MCF 10A (cell line): ENCODE measurements at regions of chr2 and their contacts with region 1.

Region 1: GRCh38 chr2:225002039-225002655 is 40.1 kb downstream of the DOCK10 start:
- DNase-seq: peak; percentile 88
- H3K4me3 Mint-ChIP-seq: no peak overlapping the region
- H3K27ac Mint-ChIP-seq: no peak overlapping the region
- H3K4me1 Mint-ChIP-seq: peaks cover 11% of the 10 kb centered on the region
- H3K27me3 Mint-ChIP-seq: no peaks in the 10 kb centered on the region
- CTCF ChIP-seq: peak; percentile 87

Region 2: GRCh38 chr2:224357098-224357901 is 644.8 kb before region 1 on chr2:
- CTCF ChIA-PET with region 1: interaction called, 7 read pairs
- POLR2A ChIA-PET with region 1: no interaction called
- intact Hi-C with region 1: loop called (anchors 1 kb)
- DNase-seq: peak; percentile 72
- H3K4me3 Mint-ChIP-seq: no peak overlapping the region
- H3K27ac Mint-ChIP-seq: no peak overlapping the region
- H3K4me1 Mint-ChIP-seq: peaks cover 7% of the 10 kb centered on the region
- H3K27me3 Mint-ChIP-seq: peaks cover 26% of the 10 kb centered on the region
- CTCF ChIP-seq: peak; percentile 80

Region 3: GRCh38 chr2:224749136-224749535 is 253.0 kb before region 1 on chr2:
- CTCF ChIA-PET with region 1: interaction called, 5 read pairs
- POLR2A ChIA-PET with region 1: no interaction called
- intact Hi-C with region 1: loop called (anchors 1 kb)
- DNase-seq: peak; percentile 17
- H3K4me3 Mint-ChIP-seq: no peak overlapping the region
- H3K27ac Mint-ChIP-seq: no peak overlapping the region
- H3K4me1 Mint-ChIP-seq: peaks cover 2% of the 10 kb centered on the region
- H3K27me3 Mint-ChIP-seq: no peaks in the 10 kb centered on the region
- CTCF ChIP-seq: no peak

Region 4: DNA sequence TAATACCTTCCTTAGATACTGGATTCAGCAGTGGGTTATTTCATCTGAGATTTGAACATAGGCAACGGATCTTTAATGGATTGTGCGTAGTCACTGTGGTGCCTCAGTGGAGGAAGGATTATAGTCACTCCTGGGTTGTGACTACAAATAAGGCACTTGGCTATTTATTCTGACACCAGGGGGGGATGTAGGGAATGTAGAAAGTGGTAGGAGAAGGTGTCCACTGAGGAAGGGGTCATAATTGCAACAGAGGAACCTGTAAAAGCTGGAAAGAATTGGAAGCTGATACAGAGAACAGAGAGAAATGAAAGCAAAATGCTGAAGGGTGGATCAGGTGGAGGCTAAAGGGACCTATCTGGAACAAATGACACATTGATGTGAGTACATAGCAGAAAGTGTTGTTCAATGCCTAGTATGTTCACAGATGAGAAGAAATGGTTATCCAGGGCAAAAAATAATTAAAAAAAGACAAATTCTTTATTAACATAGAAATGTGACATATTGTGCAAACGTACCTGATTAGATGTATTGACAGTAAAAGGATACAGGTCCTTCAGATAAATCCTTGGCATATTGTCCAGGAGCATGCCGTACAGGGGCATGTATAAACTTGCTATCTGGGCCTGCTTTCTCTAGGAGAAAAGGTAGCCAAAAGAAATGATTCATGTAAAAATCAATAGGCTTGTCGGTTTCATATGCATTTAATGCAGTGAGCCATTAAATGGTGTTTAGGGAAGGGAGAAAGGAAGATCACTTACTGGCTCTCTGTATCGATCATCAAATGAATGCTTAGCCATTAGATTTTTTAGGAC is 194.8 kb before region 1 on chr2:
- CTCF ChIA-PET with region 1: interaction called, 19 read pairs
- POLR2A ChIA-PET with region 1: interaction called, 3 read pairs
- intact Hi-C with region 1: loop called (anchors 1 kb)
- DNase-seq: peak; percentile 70
- H3K4me3 Mint-ChIP-seq: no peak overlapping the region
- H3K27ac Mint-ChIP-seq: no peak overlapping the region
- H3K4me1 Mint-ChIP-seq: peaks cover 12% of the 10 kb centered on the region
- H3K27me3 Mint-ChIP-seq: no peaks in the 10 kb centered on the region
- CTCF ChIP-seq: peak; percentile 1

Region 5: DNA sequence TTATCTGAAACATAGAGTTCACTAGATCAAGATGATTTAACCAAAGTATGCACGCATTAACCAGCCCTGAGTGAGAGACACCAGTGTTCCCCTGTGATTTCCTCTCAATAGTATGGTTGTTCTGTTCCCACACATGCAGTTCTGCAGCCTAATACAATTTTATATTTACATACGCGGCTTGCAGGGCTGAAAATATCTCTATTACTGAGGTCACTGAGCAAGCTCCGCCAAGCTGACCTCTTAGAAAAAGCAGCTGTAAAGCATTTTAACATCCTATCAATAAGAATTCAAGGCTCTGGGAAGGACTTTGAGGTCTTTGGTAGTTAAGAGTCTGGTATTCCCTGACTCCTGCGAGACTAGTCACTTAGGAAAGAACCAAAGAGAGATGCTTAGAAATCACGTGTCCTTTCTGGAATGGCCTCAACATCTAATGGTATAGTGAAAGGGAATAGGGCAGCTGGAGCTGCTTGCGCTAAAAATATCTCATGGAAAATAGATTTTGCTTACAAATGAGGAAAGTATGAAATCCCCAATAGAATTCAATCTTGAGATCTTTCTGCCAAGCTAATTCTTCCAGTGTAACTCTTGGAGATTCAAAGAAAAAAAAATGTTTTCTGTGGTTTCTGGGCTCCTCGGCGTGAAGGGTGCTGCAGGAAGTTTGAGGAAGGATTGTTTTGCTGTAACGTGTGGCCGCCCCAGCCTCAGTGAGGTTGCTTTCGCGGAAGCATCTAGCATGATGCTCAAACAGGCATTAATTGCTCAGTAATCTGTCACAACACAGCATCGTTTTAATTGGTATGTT is 19.0 kb before region 1 on chr2:
- CTCF ChIA-PET with region 1: interaction called, 14 read pairs
- POLR2A ChIA-PET with region 1: interaction called, 3 read pairs
- intact Hi-C with region 1: no loop called
- DNase-seq: no peak
- H3K4me3 Mint-ChIP-seq: no peak overlapping the region
- H3K27ac Mint-ChIP-seq: no peak overlapping the region
- H3K4me1 Mint-ChIP-seq: no peaks in the 10 kb centered on the region
- H3K27me3 Mint-ChIP-seq: no peaks in the 10 kb centered on the region
- CTCF ChIP-seq: no peak